Activated CD4-positive, alpha-beta T cell treated with anti-CD3 and anti-CD28 coated beads, Interleukin-2, amount 10 ng/mL, durations not matched to agents 7 days and 5 days (primary cell): ENCODE measurements at regions of chr1 and their contacts with region 1.

Region 1: GRCh38 chr1:161165742-161166668 is at the start of gene PPOX:
- DNase-seq: peak; percentile 98
- H3K4me3 Mint-ChIP-seq: peak within 1 kb of the TSS; percentile 85
- H3K27ac Mint-ChIP-seq: peak within 1 kb of the TSS; percentile 97
- H3K4me1 Mint-ChIP-seq: peaks cover 50% of the 10 kb centered on the region
- H3K27me3 Mint-ChIP-seq: no peaks in the 10 kb centered on the region
- total RNA-seq, gene PPOX: 33.6 to 40.7 TPM

Region 2: GRCh38 chr1:161153679-161154426 is 12.2 kb before region 1 on chr1 and contains the start of gene UFC1:
- CTCF ChIA-PET with region 1: interaction called, 14 read pairs
- POLR2A ChIA-PET with region 1: no interaction called
- DNase-seq: peak; percentile 90
- H3K4me3 Mint-ChIP-seq: peak within 1 kb of the TSS; percentile 90
- H3K27ac Mint-ChIP-seq: peak within 1 kb of the TSS; percentile 100
- H3K4me1 Mint-ChIP-seq: peaks cover 34% of the 10 kb centered on the region
- H3K27me3 Mint-ChIP-seq: no peaks in the 10 kb centered on the region
- total RNA-seq, gene UFC1: 115 to 120 TPM

Region 3: GRCh38 chr1:161177112-161177935 is 11.3 kb after region 1 on chr1 and contains the start of gene B4GALT3:
- CTCF ChIA-PET with region 1: interaction called, 30 read pairs
- POLR2A ChIA-PET with region 1: interaction called, 6 read pairs
- DNase-seq: peak; percentile 92
- H3K4me3 Mint-ChIP-seq: peak within 1 kb of the TSS; percentile 96
- H3K27ac Mint-ChIP-seq: peak within 1 kb of the TSS; percentile 99
- H3K4me1 Mint-ChIP-seq: peaks cover 74% of the 10 kb centered on the region
- H3K27me3 Mint-ChIP-seq: no peaks in the 10 kb centered on the region
- total RNA-seq, gene B4GALT3: 43.1 to 48.6 TPM